Breast epithelium (tissue), 4 donors: ENCODE measurements at regions of chr11 and their contacts with region 1.

Region 1: DNA sequence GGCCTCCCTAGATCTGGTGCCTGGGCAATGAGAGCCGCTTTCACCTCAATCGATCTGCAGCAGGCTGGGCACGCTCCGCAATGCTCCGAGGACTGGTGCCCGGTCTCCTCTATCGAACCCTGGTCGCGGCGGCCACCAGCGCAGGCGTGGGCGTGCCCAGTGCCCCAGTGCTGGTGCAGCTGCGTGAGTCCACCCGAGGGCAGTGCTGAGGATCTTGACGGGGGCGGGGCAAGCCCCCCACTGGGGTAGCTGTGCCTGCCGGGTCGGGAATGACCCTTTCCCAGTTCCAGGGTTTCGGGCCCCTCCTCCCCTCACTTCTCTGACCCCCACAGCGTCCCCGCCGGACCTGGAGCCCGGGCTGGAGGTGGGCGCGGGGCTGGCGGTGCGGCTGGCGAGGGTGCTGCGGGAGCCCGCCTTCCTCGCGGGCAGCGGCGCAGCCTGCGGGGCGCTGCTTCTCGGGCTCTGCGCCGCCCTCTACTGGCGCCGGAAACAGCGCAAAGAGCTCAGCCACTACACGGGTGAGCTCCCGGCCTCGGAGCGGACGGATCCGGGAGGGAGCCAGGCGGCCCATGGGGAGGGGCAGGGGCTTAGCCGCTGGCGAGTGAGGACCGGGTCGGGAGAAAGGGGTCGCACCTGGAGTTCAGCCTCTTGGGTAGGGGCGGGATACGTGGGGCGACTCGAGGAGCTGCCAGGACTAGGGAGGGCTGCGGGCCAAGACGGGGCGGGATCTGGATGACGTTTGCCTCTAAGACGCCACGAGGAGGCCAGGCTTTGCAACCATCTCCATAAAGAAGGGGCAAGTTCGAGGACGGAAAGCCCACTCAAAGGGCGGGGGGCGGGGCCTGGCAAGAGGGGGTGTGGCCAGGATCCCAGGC is 10.9 kb downstream of the ROBO3 start:
- DNase-seq: peak; percentile 77 to 81
- H3K4me3 ChIP-seq: peak overlapping the region; percentile 46 to 88 (median 66)
- H3K27ac ChIP-seq: peak overlapping the region; percentile 91 to 92
- H3K4me1 ChIP-seq: no peaks in the 10 kb centered on the region
- H3K27me3 ChIP-seq: peaks cover 5 to 25% of the 10 kb centered on the region in 2 donors
- CTCF ChIP-seq: peak; percentile 6 to 74 (median 44)
- POLR2A ChIP-seq: no peak

Region 2: DNA sequence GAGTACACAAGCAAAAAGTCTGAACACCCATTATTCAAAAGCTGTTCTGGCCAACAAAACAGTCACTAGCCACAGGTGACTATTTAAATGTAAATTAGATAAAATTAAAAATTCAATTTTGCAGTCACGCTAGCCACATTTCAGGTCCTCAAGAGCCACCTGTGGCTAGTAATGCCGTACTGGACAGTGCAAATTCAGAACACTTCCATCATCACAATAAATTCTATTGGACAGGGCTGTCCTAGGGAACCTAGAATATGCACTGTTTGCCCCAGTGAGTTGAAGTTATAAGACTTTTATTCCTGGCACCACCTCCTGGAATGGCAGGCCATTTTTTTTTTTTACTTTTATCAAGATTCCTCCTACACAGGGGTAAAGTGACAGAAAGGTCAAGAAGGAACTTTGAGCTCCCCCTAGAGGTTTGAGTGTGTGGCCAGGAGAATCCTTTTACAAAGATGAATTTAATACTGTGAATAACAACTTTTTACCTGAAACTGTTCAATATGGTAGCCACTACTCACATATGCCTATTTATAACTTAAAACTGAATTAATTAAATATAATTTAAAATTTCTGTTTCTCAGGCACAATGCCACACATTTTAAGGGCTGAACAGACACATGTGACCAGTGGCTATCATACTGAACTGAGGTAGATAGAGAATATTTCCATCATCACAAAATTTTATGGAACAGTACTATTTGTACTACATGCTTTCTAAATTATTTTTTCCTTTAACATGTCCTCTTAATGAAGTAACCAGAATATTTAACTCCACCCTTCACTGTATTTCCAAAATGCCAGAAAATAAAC is 82.5 kb before region 1 on chr11:
- intact Hi-C with region 1: loop called (anchors 5 kb)
- DNase-seq: no peak
- H3K4me3 ChIP-seq: no peak overlapping the region
- H3K27ac ChIP-seq: no peak overlapping the region
- H3K4me1 ChIP-seq: peaks cover 0 to 3% of the 10 kb centered on the region in 2 donors
- H3K27me3 ChIP-seq: no peaks in the 10 kb centered on the region
- CTCF ChIP-seq: peak in 2 of 3 donors; percentile 18 to 22
- POLR2A ChIP-seq: no peak

Region 3: GRCh38 chr11:124837491-124837856 is 38.7 kb before region 1 on chr11:
- intact Hi-C with region 1: no loop called
- DNase-seq: no peak
- H3K4me3 ChIP-seq: no peak overlapping the region
- H3K27ac ChIP-seq: no peak overlapping the region
- H3K4me1 ChIP-seq: peaks cover 7 to 12% of the 10 kb centered on the region in 2 donors
- H3K27me3 ChIP-seq: peaks cover 10 to 51% of the 10 kb centered on the region in 2 donors
- CTCF ChIP-seq: no peak
- POLR2A ChIP-seq: no peak